Astrocyte of the cerebellum (primary cell): ENCODE measurements at regions of chr14 and their contacts with region 1.

Region 1: GRCh38 chr14:101174980-101175606 is 271.6 kb upstream of the RTL1 start:
- DNase-seq: no peak
- H3K4me3 ChIP-seq: no peak overlapping the region
- CTCF ChIP-seq: no peak

Region 2: DNA sequence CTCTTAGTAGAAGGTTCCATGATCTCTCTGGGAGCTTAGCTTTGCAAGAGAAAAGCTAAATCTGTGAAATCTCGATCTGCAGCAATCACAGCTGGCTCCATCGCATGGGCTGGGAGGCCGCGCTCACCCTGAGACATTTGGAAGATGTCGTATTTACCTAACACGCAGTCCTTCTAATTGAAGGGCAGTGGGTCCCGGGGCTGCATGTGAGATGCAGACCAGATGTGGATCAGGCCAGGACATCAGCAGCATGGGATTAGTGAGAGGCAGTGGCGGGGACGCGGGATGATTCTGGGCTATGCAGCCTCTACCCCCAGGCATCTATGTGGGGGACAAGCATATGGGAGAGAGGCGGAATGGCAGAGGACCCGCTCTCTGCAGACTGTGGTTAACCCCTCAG is 40.8 kb after region 1 on chr14:
- in situ Hi-C with region 1: loop called (anchors 5 kb)
- DNase-seq: no peak
- H3K4me3 ChIP-seq: no peak overlapping the region
- CTCF ChIP-seq: no peak

Region 3: DNA sequence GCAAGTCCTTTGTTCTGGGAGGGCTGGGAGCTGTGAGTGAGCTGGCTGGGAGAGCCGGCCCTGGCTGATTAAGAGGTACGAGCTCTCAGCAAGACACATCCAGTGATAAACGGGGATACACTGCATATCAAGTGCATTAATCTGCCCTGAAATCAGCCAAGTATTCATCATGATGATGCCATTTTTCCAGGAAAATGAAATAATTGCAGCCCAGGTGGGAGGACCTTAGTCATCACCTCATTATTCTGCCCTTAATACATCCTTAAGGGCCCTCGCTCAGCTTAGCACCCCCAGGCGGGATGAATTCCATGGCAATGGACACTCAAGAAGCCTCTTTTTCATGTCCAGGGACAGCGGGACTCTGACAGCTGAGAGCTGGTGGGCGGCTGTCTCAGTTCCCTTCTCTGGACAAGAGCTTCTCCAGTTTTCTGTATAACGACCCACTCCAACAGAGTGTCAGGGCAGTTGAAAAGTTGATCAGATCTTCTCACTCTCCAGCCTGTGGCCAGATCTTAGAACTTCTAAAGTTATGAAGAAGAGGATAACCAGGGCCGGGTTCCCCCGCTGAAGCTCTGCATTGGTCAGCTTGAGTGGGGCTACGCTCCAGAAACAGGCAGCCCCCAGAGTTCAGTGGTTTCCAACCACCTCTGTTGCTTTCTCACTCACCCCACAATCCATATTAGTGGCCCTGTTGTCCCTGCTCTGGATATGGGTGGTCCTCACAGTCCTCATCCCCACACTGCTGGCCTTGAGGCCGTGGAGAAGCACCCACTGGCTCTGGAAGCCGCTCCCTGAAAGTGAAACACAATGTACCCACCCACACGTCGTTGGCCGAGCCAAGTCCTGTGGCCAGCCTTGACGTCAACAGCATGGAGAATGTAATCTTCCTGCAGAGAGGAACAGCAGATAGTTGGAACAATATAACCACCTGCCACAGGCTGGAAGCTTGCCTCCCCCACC is 80.0 kb after region 1 on chr14:
- in situ Hi-C with region 1: loop called (anchors 5 kb)
- DNase-seq: no peak
- H3K4me3 ChIP-seq: no peak overlapping the region
- CTCF ChIP-seq: no peak